ENCODE measurements at regions of chr5 and their contacts with region 1.

Region 1: DNA sequence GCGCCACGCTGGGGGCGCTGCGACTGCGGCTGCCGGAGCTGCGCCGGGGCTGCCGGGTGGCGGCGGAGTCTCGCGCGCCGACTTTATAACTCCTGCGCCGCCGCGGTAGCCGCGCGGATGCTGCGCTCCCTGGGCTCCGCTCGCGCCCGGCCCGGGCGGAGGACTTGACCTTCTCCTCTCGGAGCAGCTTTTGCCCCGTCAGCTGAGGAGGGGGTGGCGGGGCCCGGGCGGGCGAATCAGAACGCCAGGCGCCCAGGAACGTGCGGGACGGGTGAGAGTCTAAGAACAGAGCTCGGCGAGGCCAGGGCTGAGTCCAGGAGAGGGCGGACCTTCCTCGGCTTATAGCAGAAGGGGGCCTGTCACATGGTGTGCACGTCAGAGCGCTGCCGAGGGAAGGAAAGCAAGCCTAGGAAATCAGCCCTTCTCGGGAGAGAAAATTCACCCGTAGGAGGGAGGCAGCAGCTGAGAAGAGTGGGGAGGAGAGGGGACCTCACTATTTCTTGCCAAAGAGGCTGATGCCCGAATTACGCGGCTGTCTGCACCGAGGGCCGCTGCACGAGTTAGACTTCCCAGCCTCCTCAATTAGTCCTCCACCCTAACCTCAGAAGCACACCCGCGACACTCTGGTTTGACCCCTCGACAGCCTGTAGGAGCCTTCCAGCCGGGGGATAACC is at the start of gene FOXD1:
- DNase-seq: peak; percentile 75
- H3K4me3 Mint-ChIP-seq: peak within 1 kb of the TSS; percentile 80
- H3K27ac Mint-ChIP-seq: peak within 1 kb of the TSS; percentile 70
- H3K4me1 Mint-ChIP-seq: peaks cover 8% of the 10 kb centered on the region
- H3K27me3 Mint-ChIP-seq: peaks cover 74% of the 10 kb centered on the region
- total RNA-seq, gene FOXD1: 0.09 and 0.14 TPM in 2 replicates

Region 2: DNA sequence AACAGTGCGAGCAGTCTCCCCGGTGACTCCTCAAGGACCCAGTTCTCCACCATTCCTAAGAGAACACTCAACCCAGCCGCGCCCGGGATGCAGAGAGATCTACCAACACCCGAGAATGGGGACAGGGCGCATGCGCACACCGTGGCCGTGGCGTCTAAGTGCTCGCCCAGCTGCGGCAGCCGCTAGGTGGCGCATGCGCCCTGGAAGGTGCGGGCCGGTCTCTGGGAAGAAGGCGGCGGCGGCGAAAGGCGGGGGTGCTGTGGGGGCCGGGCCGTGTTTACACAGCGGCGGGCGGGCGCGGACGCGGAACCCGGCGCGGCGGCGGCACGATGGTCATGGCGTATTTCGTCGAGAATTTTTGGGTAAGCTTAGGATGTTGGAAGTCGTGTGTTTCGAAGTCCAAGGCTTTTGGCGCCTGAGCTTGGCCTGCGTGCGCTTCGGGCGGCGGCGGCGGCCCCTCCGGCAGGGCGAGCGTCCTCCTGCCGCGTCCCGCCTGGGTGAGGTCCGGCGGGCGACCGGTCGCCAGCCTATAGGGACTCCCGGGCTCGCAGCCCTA is 492.8 kb before region 1 on chr5 and contains the start of gene FCHO2:
- intact Hi-C with region 1: loop called (anchors 5 kb)
- DNase-seq: peak; percentile 98
- H3K4me3 Mint-ChIP-seq: peak within 1 kb of the TSS; percentile 90
- H3K27ac Mint-ChIP-seq: peak within 1 kb of the TSS; percentile 85
- H3K4me1 Mint-ChIP-seq: peaks cover 13% of the 10 kb centered on the region
- H3K27me3 Mint-ChIP-seq: peaks cover 60% of the 10 kb centered on the region
- total RNA-seq, gene FCHO2: 0.33 and 1.5 TPM in 2 replicates

Region 3: DNA sequence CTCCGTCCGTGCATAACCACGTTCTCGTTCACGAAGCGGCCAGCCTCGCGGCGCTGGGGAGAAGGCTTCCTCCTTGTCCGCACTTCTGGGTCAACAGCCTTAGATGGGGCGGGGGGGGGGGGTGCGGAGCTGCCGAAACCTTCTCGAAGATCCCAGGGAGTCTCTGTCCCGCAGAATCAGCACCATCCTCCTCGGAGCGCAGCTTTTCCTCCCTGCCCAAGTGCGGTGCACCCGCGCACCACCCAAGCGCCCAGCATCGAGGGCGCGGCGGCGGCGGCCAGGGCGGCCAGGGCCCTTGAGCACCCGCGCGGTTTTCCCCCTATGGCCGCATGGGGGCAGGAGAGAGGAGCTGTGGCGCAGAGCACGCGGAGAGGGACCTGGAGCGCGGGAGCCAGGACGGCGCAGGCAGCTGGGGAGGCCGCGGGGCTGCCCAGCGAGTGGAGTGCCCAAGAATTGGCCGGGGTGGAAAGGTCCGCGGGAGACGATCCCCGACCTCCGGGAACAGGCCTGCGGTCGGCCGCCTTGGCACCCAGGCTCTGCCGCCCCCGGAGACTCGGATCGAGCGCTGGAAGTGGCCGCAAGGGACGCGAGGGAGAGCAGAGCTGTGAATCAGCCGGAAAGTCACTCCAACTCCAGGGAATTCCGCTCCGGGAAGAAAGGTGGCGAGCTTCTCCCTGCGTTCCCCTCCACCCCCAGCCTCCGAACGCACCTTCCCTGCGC is 232.5 kb before region 1 on chr5:
- intact Hi-C with region 1: loop called (anchors 2 kb)
- DNase-seq: peak; percentile 86
- H3K4me3 Mint-ChIP-seq: no peak overlapping the region
- H3K27ac Mint-ChIP-seq: no peak overlapping the region
- H3K4me1 Mint-ChIP-seq: peaks cover 5% of the 10 kb centered on the region
- H3K27me3 Mint-ChIP-seq: peaks cover 73% of the 10 kb centered on the region

Region 4: GRCh38 chr5:73303148-73304079 is 145.2 kb before region 1 on chr5:
- intact Hi-C with region 1: loop called (anchors 1 kb)
- DNase-seq: no peak
- H3K4me3 Mint-ChIP-seq: no peak overlapping the region
- H3K27ac Mint-ChIP-seq: no peak overlapping the region
- H3K4me1 Mint-ChIP-seq: no peaks in the 10 kb centered on the region
- H3K27me3 Mint-ChIP-seq: peaks cover 81% of the 10 kb centered on the region

Region 5: DNA sequence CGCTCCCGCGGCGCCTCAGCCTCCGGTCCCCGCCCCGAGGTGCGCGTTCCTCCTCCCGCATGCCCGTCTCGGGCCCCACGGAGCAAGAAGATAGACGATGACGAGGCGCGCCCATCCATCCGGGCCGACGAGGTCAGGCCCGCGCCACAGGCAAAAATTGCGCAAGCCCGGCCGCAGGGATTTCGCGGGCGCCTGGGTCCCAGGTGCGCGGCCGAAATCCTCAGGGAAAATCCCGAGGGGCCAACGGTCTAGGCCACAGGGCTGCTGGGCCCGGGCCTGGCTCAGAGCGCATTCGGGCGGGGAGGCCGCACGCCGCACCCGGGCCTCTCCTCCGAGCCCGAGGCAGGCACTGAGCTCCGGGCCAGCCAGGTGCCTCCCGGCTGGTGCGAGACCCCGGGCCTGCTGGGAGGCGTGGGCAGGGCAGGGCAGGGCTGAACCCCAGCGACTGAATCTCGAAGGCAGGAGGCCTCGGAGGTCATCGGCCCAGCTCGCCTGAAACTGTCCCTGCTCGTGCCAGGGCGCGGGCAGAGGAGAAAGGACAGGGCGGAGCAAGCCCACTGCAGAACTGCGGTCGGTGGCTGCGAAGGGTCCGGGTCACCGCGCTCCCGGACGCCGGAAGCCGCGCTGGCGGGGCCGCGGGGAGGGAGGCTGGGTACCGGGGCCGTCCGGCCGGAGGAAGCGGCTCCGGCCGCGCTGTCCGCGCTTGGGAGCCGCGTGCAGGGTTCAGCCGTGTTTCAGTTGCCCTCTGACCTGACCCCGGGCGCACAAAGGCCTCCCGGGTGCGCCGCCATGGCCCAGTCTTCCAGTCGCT is 66.8 kb before region 1 on chr5:
- intact Hi-C with region 1: loop called (anchors 2 kb)
- DNase-seq: peak; percentile 58
- H3K4me3 Mint-ChIP-seq: no peak overlapping the region
- H3K27ac Mint-ChIP-seq: no peak overlapping the region
- H3K4me1 Mint-ChIP-seq: peaks cover 7% of the 10 kb centered on the region
- H3K27me3 Mint-ChIP-seq: peaks cover 69% of the 10 kb centered on the region

Region 6: GRCh38 chr5:73393611-73394489 is 54.8 kb before region 1 on chr5:
- intact Hi-C with region 1: no loop called
- DNase-seq: no peak
- H3K4me3 Mint-ChIP-seq: no peak overlapping the region
- H3K27ac Mint-ChIP-seq: no peak overlapping the region
- H3K4me1 Mint-ChIP-seq: peaks cover 4% of the 10 kb centered on the region
- H3K27me3 Mint-ChIP-seq: peaks cover 57% of the 10 kb centered on the region

Region 7: DNA sequence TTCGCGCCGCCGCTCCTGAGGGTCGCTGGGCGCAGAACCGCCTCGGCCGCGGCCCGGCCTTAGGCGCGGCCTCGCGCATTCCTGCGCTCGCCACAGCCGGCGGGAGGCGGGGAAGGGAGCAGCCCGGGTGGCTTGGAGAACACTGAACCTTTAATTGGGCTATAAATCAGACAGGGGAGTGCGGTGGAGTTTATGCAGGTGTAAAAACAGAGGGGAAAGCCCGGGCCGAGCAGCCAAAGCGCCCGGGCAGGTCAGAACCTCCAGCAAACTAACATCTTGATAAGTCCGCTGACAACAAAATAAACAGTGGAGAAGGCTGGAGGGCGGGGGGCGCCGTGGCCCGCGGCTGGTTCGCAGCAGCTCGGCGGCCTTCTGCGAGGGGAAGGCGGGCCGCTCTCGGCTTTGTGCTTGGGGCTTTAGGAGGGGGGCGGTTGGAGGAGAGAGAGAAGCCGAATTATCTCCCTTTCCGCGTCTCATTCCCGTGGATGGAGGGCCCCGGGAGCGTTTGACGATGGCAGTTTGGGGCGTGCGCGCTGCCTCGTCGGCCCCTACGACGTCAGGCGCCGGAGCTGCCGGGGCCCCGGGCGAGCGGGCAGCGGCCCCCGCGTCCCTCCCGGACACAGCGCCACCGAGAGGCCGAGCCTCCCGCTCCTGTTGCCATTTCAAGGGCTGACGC is 11.4 kb before region 1 on chr5:
- intact Hi-C with region 1: loop called (anchors 2 kb)
- DNase-seq: no peak
- H3K4me3 Mint-ChIP-seq: no peak overlapping the region
- H3K27ac Mint-ChIP-seq: no peak overlapping the region
- H3K4me1 Mint-ChIP-seq: peaks cover 6% of the 10 kb centered on the region
- H3K27me3 Mint-ChIP-seq: peaks cover 82% of the 10 kb centered on the region

Measured in activated CD4-positive, alpha-beta T cell treated with anti-CD3 and anti-CD28 coated beads, Interleukin-2, amount 10 ng/mL, durations not matched to agents 24 days and 14 days (primary cell).